ENCODE measurements at regions of chr1 and their contacts with region 1.

Region 1: DNA sequence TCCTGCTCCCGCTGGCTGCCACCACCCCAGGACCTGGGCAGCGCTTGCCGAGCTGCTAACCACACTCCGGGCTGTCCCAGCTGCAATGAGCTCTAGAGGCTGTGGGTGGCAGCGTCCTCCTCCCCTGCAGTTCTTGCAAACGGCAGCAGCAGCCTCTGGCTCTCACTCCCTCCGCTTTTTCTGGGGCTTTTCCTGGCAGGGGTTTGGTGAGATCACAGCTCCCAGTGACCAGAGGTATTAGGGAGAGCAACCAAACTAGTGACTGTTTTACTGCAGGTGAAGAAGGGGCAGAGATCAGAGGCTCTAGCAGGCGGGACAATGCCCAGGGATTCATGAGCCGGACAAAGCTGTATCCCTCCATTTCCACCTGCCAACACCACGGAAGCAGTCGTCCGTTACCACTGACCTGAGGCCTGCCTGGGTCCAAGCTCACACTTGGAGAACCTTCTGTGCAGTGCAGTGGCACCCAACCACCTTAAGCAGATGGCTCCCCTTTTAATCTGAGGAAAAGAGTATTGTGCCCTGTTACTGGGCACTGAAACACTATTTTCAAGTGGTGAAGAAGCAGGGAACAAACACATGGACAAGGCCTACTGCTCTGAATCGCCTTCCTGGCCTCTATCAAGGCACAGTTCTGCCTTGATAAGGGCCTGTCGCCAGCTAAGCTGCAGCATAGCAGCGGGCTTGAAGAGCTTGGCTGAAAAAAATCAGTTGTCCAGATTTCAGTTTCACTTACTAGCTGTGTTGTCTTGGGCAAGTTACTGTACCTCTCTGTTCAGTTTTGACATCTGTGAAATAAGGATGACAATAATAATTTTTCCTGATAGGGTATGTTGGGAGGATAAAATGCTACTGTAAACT is at the start of gene F5:
- DNase-seq: peak; percentile 71
- H3K4me3 Mint-ChIP-seq: peak within 1 kb of the TSS; percentile 96
- H3K27ac Mint-ChIP-seq: peak within 1 kb of the TSS; percentile 91
- H3K4me1 Mint-ChIP-seq: peaks cover 81% of the 10 kb centered on the region
- H3K27me3 Mint-ChIP-seq: no peaks in the 10 kb centered on the region
- total RNA-seq, gene F5: 58.0 and 58.2 TPM in 2 replicates

Region 2: DNA sequence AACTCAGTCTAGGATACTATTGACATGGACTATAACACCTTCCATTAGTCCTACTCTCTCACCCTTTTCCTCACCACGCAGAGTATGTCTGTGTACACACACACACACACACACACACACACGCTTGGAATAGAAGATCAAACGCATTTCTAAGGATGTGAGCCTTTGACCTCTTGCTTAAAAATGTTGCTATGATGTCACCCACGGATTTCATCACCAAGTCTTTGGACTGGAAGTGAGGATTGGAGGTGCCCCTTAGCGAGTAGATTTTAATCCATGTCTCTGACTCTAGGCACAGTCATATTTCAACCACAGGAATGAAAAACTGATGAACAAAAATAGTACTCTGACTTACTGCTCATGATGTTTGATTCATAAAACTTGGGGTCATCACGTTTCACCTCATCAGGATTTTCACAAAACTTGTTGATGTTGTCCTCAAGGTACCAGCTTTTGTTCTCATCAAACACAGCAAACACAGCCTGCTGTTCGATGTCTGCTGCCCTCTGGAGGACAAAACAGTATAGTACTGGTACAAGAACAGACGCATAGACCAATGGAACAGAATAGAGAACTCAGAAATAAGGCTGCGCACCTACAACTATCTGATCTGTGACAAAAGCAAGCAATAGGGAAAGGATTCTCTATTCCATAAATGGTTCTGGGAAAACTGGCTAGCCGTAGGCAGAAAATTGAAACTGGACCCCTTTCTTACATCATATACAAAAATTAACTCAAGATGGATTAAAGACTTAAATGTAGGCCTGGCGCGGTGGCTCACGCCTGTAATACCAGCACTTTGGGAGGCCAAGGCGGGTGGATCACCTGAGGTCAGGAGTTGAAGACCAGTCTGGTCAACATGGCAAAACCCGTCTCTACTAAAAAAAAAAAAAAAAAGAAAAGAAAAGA is 40.3 kb before region 1 on chr1:
- intact Hi-C with region 1: loop called (anchors 2 kb)
- DNase-seq: peak; percentile 40
- H3K4me3 Mint-ChIP-seq: no peak overlapping the region
- H3K27ac Mint-ChIP-seq: no peak overlapping the region
- H3K4me1 Mint-ChIP-seq: peaks cover 9% of the 10 kb centered on the region
- H3K27me3 Mint-ChIP-seq: no peaks in the 10 kb centered on the region

Region 3: DNA sequence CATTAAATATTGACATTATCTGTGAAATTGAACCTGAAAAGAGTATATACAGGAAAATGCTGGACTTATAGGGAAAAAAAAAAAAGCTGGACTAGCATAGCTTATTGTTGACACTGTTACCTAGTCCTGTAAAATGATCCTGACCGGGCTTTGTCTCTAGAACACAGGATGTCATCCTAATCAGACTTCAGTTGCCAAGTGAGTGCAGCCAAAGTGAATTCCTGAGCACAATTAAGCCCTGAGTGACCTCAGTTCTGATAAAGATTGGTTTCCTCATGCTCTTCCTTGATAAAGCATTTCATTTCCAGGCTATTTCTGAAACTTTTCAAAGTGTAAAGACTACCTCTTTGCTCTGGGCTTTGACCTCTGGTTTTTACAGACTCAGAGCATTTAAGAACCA is 23.5 kb after region 1 on chr1:
- intact Hi-C with region 1: no loop called
- DNase-seq: no peak
- H3K4me3 Mint-ChIP-seq: no peak overlapping the region
- H3K27ac Mint-ChIP-seq: no peak overlapping the region
- H3K4me1 Mint-ChIP-seq: peaks cover 26% of the 10 kb centered on the region
- H3K27me3 Mint-ChIP-seq: peaks cover 6% of the 10 kb centered on the region

Region 4: DNA sequence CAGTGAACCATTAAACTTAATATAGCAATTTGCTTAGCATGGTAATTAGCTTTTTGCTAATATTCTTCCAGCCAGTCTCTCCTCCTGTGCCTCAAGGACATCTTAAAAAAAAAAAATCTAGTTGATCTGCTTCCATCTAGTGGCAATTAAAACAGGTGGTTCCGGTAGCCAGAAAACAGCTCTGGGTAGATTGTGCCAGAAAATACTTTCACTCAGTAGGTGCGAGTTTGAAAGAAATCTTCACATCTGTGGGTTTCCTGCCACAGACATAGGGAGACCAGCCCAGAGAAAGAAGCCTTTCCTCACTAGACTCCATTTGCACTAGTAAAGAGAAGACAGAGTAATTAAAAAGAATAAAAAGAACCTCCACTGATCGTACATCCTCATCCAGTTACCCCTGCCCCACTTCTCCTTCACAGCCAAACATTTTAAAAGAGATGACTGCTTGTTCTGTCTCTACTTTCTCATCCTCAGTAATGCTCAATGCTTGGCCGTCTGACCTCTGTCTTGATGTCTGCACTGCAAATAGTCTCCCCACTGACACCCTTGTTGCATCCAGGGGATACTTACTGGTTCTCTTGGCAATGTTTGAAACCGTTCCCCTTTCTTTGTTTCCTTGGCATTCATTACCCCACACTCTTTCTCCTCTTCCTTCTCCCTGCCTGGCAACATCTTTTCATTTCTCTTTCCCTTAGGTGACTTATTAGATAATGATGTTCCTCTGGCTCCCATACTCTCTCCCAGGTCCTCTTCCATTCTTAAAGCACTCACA is 107.9 kb after region 1 on chr1:
- intact Hi-C with region 1: loop called (anchors 1 kb)
- DNase-seq: peak; percentile 56
- H3K4me3 Mint-ChIP-seq: peak overlapping the region; percentile 28
- H3K27ac Mint-ChIP-seq: peak overlapping the region; percentile 90
- H3K4me1 Mint-ChIP-seq: peaks cover 96% of the 10 kb centered on the region
- H3K27me3 Mint-ChIP-seq: no peaks in the 10 kb centered on the region

Region 5: DNA sequence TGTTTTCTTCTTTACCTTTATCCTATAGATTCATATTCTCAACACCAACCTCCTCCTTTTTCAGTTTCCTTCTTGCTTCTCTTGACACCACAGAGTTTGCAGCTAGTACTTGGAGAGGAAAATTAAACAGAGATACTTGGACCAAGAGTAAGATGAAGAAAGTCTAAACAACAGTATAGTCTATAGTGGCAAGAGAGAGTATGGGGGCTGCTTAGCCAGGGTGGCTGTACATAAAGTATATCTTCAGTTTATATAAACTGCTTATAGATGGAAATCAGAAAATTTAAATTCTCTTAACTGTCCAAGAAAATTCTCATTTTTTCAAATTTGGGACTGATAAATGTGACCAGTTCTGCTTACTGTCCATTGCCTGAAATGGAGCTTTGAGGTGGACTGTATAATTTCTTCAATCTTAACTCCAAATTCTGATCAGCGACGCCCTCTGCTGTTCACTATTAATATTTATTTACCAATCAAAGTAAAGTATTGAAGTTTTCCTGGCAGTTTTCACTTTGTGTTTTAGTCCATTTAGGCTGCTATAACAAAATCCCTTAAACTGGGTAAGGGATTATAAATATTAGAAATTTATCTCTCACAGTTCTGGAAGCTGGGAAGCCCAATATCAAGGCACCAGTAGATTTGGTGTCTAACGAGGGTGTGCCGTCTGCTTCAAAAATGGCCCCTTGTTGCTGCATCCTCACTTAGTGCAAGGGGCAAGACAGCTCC is 222.9 kb after region 1 on chr1:
- intact Hi-C with region 1: loop called (anchors 1 kb)
- DNase-seq: no peak
- H3K4me3 Mint-ChIP-seq: no peak overlapping the region
- H3K27ac Mint-ChIP-seq: no peak overlapping the region
- H3K4me1 Mint-ChIP-seq: peaks cover 10% of the 10 kb centered on the region
- H3K27me3 Mint-ChIP-seq: no peaks in the 10 kb centered on the region

Region 6: DNA sequence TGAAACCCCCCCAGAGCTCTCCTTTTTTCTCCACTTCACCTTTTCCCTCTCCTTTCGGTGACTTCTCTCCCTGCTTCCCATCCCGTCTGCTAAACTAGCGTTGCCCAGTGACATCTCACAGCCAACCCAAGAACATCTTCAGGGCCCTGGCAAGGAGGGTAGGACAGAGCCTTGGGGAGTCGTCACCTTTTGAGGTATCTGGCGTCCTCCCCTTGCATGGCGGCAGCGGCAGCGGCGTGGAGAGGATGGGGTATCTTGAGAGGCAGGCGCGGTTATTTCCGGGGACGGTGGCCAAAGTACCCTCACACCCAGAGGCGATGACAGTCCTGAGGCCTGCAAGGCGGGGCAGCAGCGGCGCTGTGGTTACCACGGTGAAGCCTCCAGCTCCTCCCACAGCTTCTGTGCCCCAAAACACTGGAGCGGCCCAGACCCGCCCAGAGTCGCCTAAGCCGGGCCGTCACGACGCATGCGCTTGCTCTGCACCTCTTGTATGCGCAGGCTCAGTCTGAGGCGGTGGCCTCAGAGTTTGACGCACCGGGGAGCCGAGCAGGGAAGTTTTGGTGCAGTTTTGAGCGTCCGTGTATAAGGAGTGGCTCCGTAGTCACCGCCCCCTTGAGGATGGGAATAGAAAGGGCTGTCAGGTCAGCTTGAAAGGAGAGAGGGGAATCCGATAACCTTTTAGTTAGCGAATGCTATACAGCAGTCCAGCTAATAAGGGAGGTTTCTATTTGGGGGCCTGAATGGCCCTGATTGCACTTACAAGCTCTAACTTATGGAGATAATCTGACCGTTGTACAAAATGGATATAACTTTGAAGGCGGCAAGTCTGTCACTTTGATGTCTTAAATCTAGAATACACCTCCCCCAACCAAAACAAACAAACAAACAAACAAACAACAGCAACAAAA is 487.9 kb after region 1 on chr1 and contains the start of gene KIFAP3:
- intact Hi-C with region 1: loop called (anchors 10 kb)
- DNase-seq: peak; percentile 95
- H3K4me3 Mint-ChIP-seq: peak within 1 kb of the TSS; percentile 95
- H3K27ac Mint-ChIP-seq: peak within 1 kb of the TSS; percentile 96
- H3K4me1 Mint-ChIP-seq: peaks cover 45% of the 10 kb centered on the region
- H3K27me3 Mint-ChIP-seq: no peaks in the 10 kb centered on the region
- total RNA-seq, gene KIFAP3: 12.9 and 13.5 TPM in 2 replicates

Measured in activated T-helper 1 cell treated with anti-CD3 and anti-CD28 coated beads, Interleukin-12 subunit alpha, Interleukin-12 subunit beta, Interleukin-2, Interleukin-4 antibody, amounts not matched to agents 30 ng/mL and 10 ng/mL and 1 ng/mL, durations not matched to agents 14 hours and 24 hours and 36 hours (primary cell).